Activated T-helper 1 cell treated with anti-CD3 and anti-CD28 coated beads, Interleukin-12 subunit alpha, Interleukin-12 subunit beta, Interleukin-2, Interleukin-4 antibody, amounts not matched to agents 30 ng/mL and 10 ng/mL and 1 ng/mL, durations not matched to agents 14 hours and 24 hours and 36 hours (primary cell): ENCODE measurements at regions of chr16 and their contacts with region 1.

Region 1: DNA sequence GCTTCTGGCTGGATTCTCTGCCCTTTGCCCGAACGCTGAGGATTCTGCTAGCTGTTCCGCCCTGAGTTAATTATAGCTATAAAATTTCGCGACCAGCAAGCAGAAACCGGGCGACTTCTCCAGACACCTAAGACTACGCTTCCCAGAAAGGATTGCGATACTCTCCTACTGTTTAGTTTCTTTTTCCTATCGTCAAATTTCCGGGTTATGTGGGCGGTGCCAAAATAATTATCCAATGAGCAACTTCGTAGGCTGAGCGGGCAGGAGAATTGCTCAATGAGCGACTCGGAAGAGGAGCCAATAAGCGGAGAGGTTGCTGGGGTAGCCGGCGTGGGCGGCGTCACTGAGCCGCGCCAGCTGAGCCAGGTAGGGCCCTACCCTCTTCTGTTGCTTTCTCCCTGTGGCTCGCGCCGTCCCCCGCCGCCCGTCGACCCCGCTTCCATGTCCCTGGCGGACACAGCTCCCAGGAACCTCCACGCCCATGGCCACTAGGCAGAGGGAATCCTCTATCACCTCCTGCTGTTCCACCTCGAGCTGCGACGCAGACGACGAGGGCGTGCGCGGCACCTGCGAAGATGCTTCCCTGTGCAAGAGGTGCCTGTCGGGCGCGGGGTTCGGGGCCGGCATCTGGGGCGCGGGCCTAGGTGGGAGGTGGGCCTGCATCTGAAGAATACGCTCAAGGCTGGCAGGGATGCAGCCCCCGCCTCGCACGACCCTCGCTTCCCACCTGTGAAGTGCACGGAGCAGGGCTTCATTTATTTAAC is at the start of gene LCMT1:
- DNase-seq: peak; percentile 91
- H3K4me3 Mint-ChIP-seq: peak within 1 kb of the TSS; percentile 98
- H3K27ac Mint-ChIP-seq: peak within 1 kb of the TSS; percentile 98
- H3K4me1 Mint-ChIP-seq: peaks cover 60% of the 10 kb centered on the region
- H3K27me3 Mint-ChIP-seq: peaks cover 1% of the 10 kb centered on the region
- total RNA-seq, gene LCMT1: 39.1 and 40.1 TPM in 2 replicates

Region 2: DNA sequence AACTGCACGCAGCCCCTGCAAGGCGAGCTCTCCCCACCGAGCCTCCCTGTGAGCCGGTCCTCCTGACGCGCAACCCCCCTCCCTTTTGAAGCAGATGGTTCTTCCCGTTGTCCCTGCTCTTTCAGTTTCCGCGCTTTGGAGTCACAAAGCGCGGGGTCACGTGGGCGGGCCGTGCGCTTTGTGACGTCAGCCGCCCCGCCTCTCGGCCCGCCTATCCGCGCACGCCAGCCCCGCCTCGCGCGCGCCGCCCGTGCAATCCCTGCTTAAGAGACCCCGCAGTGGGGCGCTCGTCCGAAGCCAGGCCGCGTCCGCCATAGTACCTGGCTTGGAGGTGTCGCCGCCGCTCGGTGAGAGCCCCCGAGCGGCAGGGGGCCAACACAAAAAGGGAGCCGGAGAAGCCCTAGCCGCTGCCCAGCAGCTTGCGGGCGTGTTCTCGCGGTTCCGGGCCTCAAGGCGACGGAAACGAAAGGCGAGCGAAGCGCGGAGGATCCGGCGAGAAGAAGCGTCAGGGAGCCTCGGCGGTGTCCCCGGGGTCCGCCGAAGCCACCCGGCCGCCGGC is 572.2 kb before region 1 on chr16 and contains the start of gene RBBP6:
- intact Hi-C with region 1: loop called (anchors 5 kb)
- DNase-seq: peak; percentile 92
- H3K4me3 Mint-ChIP-seq: peak within 1 kb of the TSS; percentile 100
- H3K27ac Mint-ChIP-seq: peak within 1 kb of the TSS; percentile 100
- H3K4me1 Mint-ChIP-seq: peaks cover 30% of the 10 kb centered on the region
- H3K27me3 Mint-ChIP-seq: no peaks in the 10 kb centered on the region
- total RNA-seq, gene RBBP6: 67.0 and 68.4 TPM in 2 replicates

Region 3: GRCh38 chr16:25014500-25015147 is 97.0 kb before region 1 on chr16:
- intact Hi-C with region 1: loop called (anchors 1 kb)
- DNase-seq: no peak
- H3K4me3 Mint-ChIP-seq: peak overlapping the region; percentile 94
- H3K27ac Mint-ChIP-seq: peak overlapping the region; percentile 89
- H3K4me1 Mint-ChIP-seq: peaks cover 73% of the 10 kb centered on the region
- H3K27me3 Mint-ChIP-seq: no peaks in the 10 kb centered on the region

Region 4: GRCh38 chr16:25051406-25052150 is 60.0 kb before region 1 on chr16:
- intact Hi-C with region 1: loop called (anchors 1 kb)
- DNase-seq: no peak
- H3K4me3 Mint-ChIP-seq: peak overlapping the region; percentile 57
- H3K27ac Mint-ChIP-seq: peak overlapping the region; percentile 90
- H3K4me1 Mint-ChIP-seq: peaks cover 62% of the 10 kb centered on the region
- H3K27me3 Mint-ChIP-seq: no peaks in the 10 kb centered on the region

Region 5: DNA sequence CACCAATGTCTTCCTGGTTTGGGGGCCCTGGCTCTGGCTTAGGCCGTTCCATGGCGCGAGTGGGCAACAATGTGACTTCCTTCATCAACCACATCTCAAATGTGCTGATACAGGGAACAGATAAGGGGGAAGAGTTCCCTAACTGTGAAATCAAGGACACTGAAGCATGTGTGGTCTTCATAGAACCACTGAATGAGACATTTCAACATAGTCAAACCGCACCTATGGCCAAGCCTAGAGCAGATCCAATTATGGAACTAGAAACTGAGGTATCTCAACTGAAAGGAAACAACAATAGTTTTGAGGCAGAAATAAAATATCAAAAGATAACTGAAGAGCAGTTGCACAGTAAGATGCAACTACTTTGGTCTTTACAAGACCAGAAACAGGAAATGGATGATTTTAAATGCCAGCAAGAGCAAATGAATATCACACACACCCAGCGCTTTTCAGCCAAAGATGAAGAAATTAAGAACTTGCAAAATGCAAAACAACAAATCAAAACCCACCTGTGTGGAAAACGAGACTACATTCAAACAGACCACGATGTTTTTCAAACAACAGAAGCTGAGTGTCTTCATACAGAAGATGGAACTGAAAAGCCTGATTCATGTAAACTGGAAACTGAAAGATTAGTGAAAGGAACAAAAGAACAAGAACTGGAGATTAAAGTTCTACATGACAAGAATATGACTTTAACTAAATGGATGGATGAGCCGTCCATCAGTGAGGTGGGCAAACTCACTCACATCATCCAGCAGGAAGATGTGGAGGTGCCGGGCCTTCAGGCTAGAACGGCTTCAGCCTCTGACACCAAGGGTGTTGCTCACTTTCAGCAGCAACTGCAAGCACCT is 18.1 kb before region 1 on chr16:
- intact Hi-C with region 1: loop called (anchors 1 kb)
- DNase-seq: no peak
- H3K4me3 Mint-ChIP-seq: peak overlapping the region; percentile 56
- H3K27ac Mint-ChIP-seq: peak overlapping the region; percentile 77
- H3K4me1 Mint-ChIP-seq: peaks cover 25% of the 10 kb centered on the region
- H3K27me3 Mint-ChIP-seq: peaks cover 4% of the 10 kb centered on the region

Region 6: DNA sequence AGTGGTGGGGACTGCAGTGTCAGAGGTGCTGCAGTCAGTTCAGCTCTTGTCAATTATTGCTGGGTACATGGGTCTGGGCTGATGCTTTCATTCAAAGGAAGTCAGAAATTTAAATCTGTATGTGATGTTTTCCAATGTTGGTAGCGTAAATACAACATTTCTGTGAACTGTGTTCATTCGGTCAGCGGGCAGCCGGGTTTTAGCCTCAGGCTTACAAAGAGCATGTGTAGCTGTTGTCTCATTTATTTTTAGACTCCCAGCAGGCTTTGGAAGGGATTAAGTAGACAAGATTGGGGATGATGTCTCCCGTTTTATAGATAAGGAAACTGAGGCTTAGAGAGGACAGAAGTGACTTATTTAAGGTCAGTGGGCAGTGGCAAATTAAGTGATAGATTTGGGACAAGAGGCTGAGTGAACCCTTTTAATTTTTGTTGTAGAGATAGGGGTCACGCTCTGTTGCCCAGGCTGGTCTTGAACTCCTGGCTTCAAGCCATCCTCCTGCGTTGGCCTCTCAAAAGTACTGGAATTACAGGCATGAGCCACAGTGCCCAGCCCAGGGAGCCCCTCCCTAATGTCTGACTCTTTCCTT is 113.2 kb after region 1 on chr16:
- intact Hi-C with region 1: loop called (anchors 5 kb)
- DNase-seq: no peak
- H3K4me3 Mint-ChIP-seq: no peak overlapping the region
- H3K27ac Mint-ChIP-seq: no peak overlapping the region
- H3K4me1 Mint-ChIP-seq: no peaks in the 10 kb centered on the region
- H3K27me3 Mint-ChIP-seq: no peaks in the 10 kb centered on the region

Region 7: DNA sequence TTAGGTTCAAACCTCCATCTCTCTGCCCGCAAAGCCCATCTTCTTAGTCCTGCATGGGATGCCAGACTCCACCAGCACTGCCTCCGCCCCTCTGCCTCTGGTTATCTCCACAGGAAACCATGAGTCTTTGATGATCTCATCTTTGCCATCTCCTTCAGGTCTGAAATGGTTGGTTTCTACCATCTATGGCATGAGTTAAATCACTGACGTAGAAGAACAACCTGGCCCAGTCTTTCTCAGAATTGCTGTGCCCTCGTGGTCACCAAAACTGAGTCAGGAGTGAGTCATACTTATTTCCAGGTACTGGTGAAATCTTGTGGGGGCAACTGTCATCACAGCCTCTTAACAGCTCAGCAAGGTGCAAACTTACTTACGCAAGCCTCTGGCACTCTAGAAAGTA is 1486.5 kb after region 1 on chr16:
- intact Hi-C with region 1: loop called (anchors 5 kb)
- DNase-seq: peak; percentile 84
- H3K4me3 Mint-ChIP-seq: peak overlapping the region; percentile 48
- H3K27ac Mint-ChIP-seq: peak overlapping the region; percentile 97
- H3K4me1 Mint-ChIP-seq: peaks cover 85% of the 10 kb centered on the region
- H3K27me3 Mint-ChIP-seq: no peaks in the 10 kb centered on the region